Left ventricle myocardium superior (tissue), 1 donor: ENCODE measurements at regions of chr9 and their contacts with region 1.

Region 1: GRCh38 chr9:121213136-121213806 is 11.6 kb upstream of the RAB14 start:
- DNase-seq: peak; percentile 93
- ATAC-seq: peak; percentile 97

Region 2: GRCh38 chr9:121133149-121133816 is 80.0 kb before region 1 on chr9:
- intact Hi-C with region 1: no loop called
- DNase-seq: peak; percentile 31
- ATAC-seq: no peak

Region 3: GRCh38 chr9:121278535-121279261 is 65.4 kb after region 1 on chr9:
- intact Hi-C with region 1: no loop called
- DNase-seq: peak; percentile 68
- ATAC-seq: peak; percentile 59

Region 4: DNA sequence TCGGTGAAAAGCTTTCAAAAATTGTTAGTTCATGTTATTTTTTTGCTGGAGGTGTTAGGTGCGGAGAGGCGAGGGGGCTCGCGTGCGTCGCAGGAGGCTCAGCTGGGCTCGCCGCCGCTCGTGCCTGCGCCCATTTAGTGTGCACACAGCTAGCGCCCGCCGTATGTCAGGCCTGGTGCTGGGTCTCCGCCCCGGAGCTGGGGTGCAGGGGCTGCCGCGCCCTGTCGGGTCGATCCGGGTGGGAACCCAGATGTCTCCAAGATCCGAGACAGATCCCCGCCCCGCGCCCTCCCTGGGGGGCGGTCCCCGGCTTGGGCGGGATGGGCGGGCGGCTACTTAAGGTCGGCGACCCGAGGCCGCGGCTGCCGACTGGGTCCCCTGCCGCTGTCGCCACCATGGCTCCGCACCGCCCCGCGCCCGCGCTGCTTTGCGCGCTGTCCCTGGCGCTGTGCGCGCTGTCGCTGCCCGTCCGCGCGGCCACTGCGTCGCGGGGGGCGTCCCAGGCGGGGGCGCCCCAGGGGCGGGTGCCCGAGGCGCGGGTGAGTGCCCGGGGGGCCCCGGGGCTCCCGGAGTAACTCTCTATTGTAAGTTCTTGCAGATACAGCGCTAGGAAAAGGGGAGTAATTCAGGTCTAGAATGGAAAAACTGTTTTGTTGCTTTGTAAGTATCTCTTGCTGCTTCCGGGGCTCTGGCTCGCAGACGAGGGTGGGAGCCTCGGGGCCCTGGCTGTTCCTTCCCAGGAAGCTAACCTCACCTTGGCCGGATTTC is 86.4 kb after region 1 on chr9:
- intact Hi-C with region 1: loop called (anchors 10 kb)
- DNase-seq: peak; percentile 94
- ATAC-seq: peak; percentile 80

Region 5: DNA sequence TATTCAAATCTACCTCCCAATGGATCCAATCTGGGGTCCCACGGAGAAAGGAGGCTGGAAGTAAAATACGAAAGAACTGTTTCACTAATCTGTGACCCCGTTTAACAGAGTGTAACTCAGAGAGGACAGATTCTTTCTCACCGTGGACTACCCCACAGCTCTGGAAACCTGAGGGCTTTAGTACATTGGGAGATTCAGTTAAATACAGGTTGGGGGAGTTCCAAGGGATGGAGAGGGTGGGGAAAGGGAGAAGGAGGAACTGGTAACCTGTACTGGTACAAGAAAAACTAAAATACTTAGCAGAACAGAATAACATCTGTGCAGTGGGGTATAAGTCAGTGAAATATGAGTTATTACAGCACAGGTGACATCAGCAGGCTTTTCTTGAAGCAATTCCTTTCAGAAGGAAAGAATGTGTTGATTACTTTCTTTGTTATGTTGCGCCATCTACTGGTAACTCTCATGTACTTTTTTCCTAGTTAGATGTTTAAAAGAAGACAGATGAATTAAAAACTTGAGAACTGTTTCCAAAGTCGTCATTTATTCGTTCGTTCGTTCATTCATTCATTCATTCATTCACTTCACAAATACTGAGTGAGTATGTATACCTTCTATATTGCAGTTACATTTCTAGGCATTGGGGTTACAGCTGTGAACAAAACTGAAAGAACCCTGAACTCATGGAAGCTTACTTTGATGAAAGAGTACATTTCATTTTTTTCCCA is 186.8 kb after region 1 on chr9:
- intact Hi-C with region 1: loop called (anchors 2 kb)
- DNase-seq: no peak
- ATAC-seq: peak; percentile 36